AG04450 (cell line): ENCODE measurements at regions of chr9 and their contacts with region 1.

Region 1: GRCh38 chr9:86486891-86487837 is 133.0 kb upstream of the TUT7 start:
- DNase-seq: no peak
- H3K4me3 ChIP-seq: no peak overlapping the region
- H3K27ac ChIP-seq: no peak overlapping the region
- H3K27me3 ChIP-seq: no peaks in the 10 kb centered on the region
- CTCF ChIP-seq: peak; percentile 75

Region 2: GRCh38 chr9:85949586-85950335 is 537.4 kb before region 1 on chr9:
- CTCF ChIA-PET with region 1: no interaction called
- POLR2A ChIA-PET with region 1: no interaction called
- DNase-seq: no peak
- H3K4me3 ChIP-seq: no peak overlapping the region
- H3K27ac ChIP-seq: no peak overlapping the region
- H3K27me3 ChIP-seq: no peaks in the 10 kb centered on the region
- CTCF ChIP-seq: no peak

Region 3: GRCh38 chr9:86637515-86637914 is 150.4 kb after region 1 on chr9:
- CTCF ChIA-PET with region 1: interaction called, 25 read pairs
- POLR2A ChIA-PET with region 1: no interaction called
- DNase-seq: no peak
- H3K4me3 ChIP-seq: no peak overlapping the region
- H3K27ac ChIP-seq: no peak overlapping the region
- H3K27me3 ChIP-seq: peaks cover 2% of the 10 kb centered on the region
- CTCF ChIP-seq: peak; percentile 84

Region 4: GRCh38 chr9:87324613-87325194 is 837.5 kb after region 1 on chr9:
- CTCF ChIA-PET with region 1: interaction called, 60 read pairs
- POLR2A ChIA-PET with region 1: no interaction called
- DNase-seq: peak; percentile 20
- H3K4me3 ChIP-seq: no peak overlapping the region
- H3K27ac ChIP-seq: no peak overlapping the region
- H3K27me3 ChIP-seq: no peaks in the 10 kb centered on the region
- CTCF ChIP-seq: peak; percentile 72